Kidney (tissue), 22 donors: ENCODE measurements at regions of chr9 and their contacts with region 1.

Region 1: DNA sequence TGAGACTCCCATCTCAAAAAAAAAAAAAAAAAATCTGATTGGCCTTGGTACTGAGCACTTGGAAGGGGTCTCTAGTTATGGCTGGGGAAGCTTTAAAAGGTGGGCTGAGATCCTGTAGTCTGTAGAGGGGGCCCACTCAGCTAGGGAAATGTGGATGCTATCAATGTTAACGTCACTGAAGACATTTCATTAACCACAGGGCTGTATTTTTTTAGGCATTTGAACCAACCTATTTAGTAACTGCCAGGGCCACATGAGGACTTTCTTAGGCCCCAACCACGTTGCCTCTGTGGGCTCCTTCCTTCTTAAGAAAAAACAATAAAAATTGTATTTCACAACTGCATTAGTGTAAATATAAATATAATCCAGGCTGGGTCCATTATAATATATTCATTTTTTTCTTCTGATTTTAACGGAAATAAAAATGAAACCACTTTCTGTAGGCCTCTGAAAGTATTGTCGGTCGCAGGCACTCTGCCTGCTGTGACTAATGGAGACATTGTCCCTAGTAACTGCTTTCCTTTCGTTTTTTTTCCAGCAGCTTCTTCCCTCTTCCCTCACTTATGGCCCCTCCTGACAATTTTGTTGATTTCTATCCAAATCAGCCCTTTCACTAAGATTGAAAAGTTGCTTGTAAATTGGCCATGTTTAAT is 71.6 kb downstream of the GCNT1 start:
- DNase-seq: no peak
- H3K4me3 ChIP-seq: no peak overlapping the region
- H3K27ac ChIP-seq: peak overlapping the region in 1 of 2 donors; percentile 14
- H3K4me1 ChIP-seq: peaks cover 0 to 3% (median 0%) of the 10 kb centered on the region in 3 donors
- H3K27me3 ChIP-seq: no peaks in the 10 kb centered on the region
- CTCF ChIP-seq: no peak

Region 2: DNA sequence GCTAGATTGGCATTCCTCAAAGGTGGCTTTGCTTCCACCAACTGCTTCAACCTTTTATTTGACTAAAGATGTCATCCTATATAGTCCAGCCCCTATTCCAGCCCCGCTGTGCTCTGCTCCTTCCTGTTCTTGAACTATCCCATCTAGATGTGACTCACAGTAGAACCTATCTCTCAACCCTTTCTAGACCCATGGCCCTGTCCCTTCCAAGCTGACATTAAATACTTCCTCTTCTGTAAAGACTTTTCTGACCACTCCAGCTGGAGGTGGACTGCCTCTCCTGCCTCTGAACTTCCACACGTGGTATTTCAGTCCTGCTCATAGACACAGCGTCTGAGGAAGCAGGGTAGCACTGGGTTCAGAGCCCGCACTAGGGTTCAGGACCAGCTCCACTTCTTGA is 1409.9 kb before region 1 on chr9:
- intact Hi-C with region 1: loop called (anchors 10 kb)
- DNase-seq: no peak
- H3K4me3 ChIP-seq: no peak overlapping the region
- H3K27ac ChIP-seq: no peak overlapping the region
- H3K4me1 ChIP-seq: no peaks in the 10 kb centered on the region
- H3K27me3 ChIP-seq: no peaks in the 10 kb centered on the region
- CTCF ChIP-seq: no peak